ENCODE measurements at regions of chr11 and their contacts with region 1.

Region 1: DNA sequence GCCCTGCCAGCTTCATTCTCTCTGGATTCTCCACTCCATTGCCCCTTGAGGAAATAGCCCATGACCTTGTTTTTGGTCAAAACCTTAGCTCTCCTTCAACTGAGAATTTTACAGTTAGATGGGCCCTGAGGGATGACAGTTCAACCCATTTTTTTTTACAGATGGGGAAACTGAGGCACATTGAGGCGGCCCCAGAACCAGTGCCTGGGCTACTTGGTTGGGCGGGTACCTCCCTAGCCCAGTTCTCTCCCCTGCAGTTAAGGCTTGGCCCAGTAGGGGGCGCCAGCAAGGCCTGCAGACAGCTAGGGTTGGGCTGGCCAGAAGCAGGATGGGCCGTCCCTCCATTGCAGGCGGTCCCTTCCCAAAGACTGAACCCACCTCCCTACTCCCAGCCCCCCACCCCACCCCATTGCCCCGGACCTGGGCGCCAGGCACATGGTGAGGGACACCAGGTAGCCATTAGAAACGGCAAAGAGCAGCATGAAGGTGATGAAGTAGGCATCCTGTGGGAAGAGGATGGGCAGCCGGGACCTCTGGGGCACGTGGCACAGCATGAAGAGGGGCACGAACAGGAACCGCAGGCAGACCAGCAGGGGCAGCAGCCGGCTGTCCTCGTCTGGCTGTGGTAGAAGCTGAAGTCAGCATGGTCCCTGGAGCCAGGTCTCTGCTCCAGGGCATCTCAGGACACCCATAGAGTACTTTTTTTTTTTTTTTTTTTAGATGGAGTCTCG is 7.6 kb downstream of the SLC29A2 start:
- DNase-seq: peak; percentile 84
- H3K4me3 Mint-ChIP-seq: no peak overlapping the region
- H3K27ac Mint-ChIP-seq: no peak overlapping the region
- H3K4me1 Mint-ChIP-seq: no peaks in the 10 kb centered on the region
- H3K27me3 Mint-ChIP-seq: no peaks in the 10 kb centered on the region

Region 2: GRCh38 chr11:66344550-66345315 is 19.2 kb before region 1 on chr11 and contains the start of gene BRMS1:
- CTCF ChIA-PET with region 1: interaction called, 14 read pairs
- POLR2A ChIA-PET with region 1: no interaction called
- intact Hi-C with region 1: no loop called
- DNase-seq: peak; percentile 98
- H3K4me3 Mint-ChIP-seq: peak within 1 kb of the TSS; percentile 94
- H3K27ac Mint-ChIP-seq: peak within 1 kb of the TSS; percentile 85
- H3K4me1 Mint-ChIP-seq: peaks cover 50% of the 10 kb centered on the region
- H3K27me3 Mint-ChIP-seq: peaks cover 3% of the 10 kb centered on the region
- total RNA-seq, gene BRMS1: 29.3 to 31.2 TPM

Measured in activated CD4-positive, alpha-beta memory T cell treated with anti-CD3 and anti-CD28 coated beads for 36 hours (primary cell).